Activated CD4-positive, alpha-beta memory T cell treated with anti-CD3 and anti-CD28 coated beads for 36 hours (primary cell): ENCODE measurements at regions of chr14 and their contacts with region 1.

Region 1: GRCh38 chr14:61934385-61934784 is 172.2 kb downstream of the SNAPC1 start:
- DNase-seq: peak; percentile 41
- H3K4me3 Mint-ChIP-seq: no peak overlapping the region
- H3K27ac Mint-ChIP-seq: no peak overlapping the region
- H3K4me1 Mint-ChIP-seq: peaks cover 7% of the 10 kb centered on the region
- H3K27me3 Mint-ChIP-seq: peaks cover 48% of the 10 kb centered on the region

Region 2: DNA sequence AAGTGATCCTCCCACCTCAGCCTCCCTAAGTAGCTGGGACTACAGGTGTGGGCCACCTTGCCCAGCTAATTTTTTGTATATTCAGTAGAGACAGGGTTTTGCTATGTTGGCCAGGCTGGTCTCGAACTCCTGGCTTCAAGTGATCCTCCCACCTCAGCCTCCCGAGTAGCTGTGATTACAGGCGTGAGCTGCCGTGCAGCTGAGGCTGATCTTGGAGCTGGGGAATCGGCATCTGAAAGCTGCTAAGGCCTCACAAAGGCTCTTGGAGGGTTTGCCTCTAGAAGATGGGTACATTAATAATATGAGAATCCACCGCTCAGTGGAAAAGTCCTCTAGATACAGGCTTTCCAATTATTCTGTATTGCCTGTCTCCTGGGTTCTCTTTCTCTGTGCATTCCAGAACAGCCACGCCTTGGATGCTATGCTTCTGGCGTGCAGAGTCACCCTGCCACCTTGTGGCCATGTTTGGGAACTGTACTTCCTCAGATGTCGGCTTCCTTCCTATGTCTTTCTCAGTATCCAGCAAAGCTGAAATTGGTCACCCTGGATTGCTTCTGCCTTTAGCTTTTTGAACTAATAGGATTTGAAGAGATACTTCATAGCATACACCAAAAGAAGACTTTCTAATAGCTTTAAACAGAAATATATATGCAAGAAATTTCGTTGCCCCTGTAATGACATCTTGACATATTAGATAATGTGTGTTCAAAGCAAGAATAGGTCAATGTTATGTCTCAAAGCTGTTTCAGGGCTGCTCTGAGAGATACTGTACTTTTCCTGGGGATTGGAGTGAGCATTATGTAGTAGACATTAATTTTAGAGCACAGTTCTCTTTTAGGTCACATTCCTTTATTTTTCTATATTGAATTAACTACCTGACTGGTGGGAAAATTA is 96.8 kb before region 1 on chr14:
- CTCF ChIA-PET with region 1: no interaction called
- POLR2A ChIA-PET with region 1: no interaction called
- intact Hi-C with region 1: no loop called
- DNase-seq: peak; percentile 85
- H3K4me3 Mint-ChIP-seq: no peak overlapping the region
- H3K27ac Mint-ChIP-seq: no peak overlapping the region
- H3K4me1 Mint-ChIP-seq: peaks cover 4% of the 10 kb centered on the region
- H3K27me3 Mint-ChIP-seq: peaks cover 2% of the 10 kb centered on the region

Region 3: DNA sequence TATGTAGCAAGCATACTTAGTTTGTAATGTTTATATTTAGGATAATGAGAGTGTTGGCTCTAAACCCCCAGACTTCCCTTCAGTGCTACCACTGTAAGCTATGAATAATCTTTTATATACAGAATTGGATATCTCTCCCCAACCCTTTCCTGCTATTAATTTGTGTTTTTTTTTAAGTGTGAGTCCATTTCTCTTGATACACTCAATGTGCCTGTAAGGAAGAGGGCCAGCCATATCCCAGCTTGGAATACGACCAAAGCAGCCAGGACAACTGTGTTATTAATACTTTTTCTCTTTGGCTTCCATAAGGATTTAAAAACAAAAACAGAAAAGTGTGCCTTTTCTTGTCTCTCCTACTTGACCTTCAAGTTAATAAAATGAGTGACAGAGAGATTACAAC is 55.5 kb before region 1 on chr14:
- CTCF ChIA-PET with region 1: no interaction called
- POLR2A ChIA-PET with region 1: no interaction called
- intact Hi-C with region 1: no loop called
- DNase-seq: no peak
- H3K4me3 Mint-ChIP-seq: no peak overlapping the region
- H3K27ac Mint-ChIP-seq: no peak overlapping the region
- H3K4me1 Mint-ChIP-seq: no peaks in the 10 kb centered on the region
- H3K27me3 Mint-ChIP-seq: peaks cover 35% of the 10 kb centered on the region

Region 4: GRCh38 chr14:61894452-61895077 is 39.8 kb before region 1 on chr14:
- CTCF ChIA-PET with region 1: interaction called, 5 read pairs
- POLR2A ChIA-PET with region 1: no interaction called
- intact Hi-C with region 1: loop called (anchors 1 kb)
- DNase-seq: peak; percentile 68
- H3K4me3 Mint-ChIP-seq: no peak overlapping the region
- H3K27ac Mint-ChIP-seq: no peak overlapping the region
- H3K4me1 Mint-ChIP-seq: peaks cover 10% of the 10 kb centered on the region
- H3K27me3 Mint-ChIP-seq: peaks cover 5% of the 10 kb centered on the region

Region 5: DNA sequence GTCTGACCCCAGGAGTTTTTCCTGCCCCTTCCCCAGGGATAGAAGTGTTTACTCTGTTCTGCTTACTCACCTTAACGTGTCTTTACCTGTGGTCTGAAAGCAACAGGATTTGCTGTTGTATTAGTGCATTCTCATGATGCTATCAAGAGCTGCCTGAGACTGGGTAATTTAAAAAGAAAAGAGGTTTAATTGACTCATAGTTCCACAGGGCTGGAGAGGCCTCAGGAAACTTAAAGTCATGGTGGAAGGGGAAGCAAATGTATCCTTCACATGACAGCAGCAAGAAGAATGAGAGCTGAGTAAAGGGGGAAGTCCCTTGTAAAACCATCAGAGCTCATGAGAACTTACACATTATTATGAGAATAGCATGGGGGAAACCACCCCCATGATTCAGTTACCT is 68.3 kb after region 1 on chr14:
- CTCF ChIA-PET with region 1: interaction called, 4 read pairs
- POLR2A ChIA-PET with region 1: no interaction called
- intact Hi-C with region 1: loop called (anchors 1 kb)
- DNase-seq: peak; percentile 14
- H3K4me3 Mint-ChIP-seq: no peak overlapping the region
- H3K27ac Mint-ChIP-seq: no peak overlapping the region
- H3K4me1 Mint-ChIP-seq: peaks cover 9% of the 10 kb centered on the region
- H3K27me3 Mint-ChIP-seq: peaks cover 14% of the 10 kb centered on the region